ENCODE measurements at regions of chr2 and their contacts with region 1.

Region 1: GRCh38 chr2:177164584-177165052 is 48.0 kb upstream of the HNRNPA3 start:
- DNase-seq: peak; percentile 70 to 76 (median 74)
- H3K4me3 ChIP-seq: no peak overlapping the region
- H3K4me3 Mint-ChIP-seq: no peak overlapping the region
- H3K27ac ChIP-seq: no peak overlapping the region
- H3K27ac Mint-ChIP-seq: no peak overlapping the region
- H3K4me1 ChIP-seq: peaks cover 25% of the 10 kb centered on the region
- H3K4me1 Mint-ChIP-seq: peaks cover 7 to 19% (median 12%) of the 10 kb centered on the region in 4 donors
- H3K27me3 ChIP-seq: no peaks in the 10 kb centered on the region
- H3K27me3 Mint-ChIP-seq: peaks cover 2 to 5% of the 10 kb centered on the region in 2 donors

Region 2: GRCh38 chr2:177183860-177184259 is 19.2 kb after region 1 on chr2:
- CTCF ChIA-PET with region 1: interaction called, 24 read pairs
- POLR2A ChIA-PET with region 1: interaction called, 3 read pairs
- intact Hi-C with region 1: no loop called
- DNase-seq: no peak
- H3K4me3 ChIP-seq: no peak overlapping the region
- H3K4me3 Mint-ChIP-seq: peak overlapping the region in 1 of 8 donors; percentile 15
- H3K27ac ChIP-seq: no peak overlapping the region
- H3K27ac Mint-ChIP-seq: peak overlapping the region in 1 of 7 donors; percentile 48
- H3K4me1 ChIP-seq: no peaks in the 10 kb centered on the region
- H3K4me1 Mint-ChIP-seq: no peaks in the 10 kb centered on the region
- H3K27me3 ChIP-seq: no peaks in the 10 kb centered on the region
- H3K27me3 Mint-ChIP-seq: peaks cover 0 to 2% of the 10 kb centered on the region in 2 donors

Region 3: GRCh38 chr2:177239932-177240630 is 75.5 kb after region 1 on chr2:
- CTCF ChIA-PET with region 1: interaction called, 12 read pairs
- POLR2A ChIA-PET with region 1: interaction called, 6 read pairs
- intact Hi-C with region 1: no loop called
- DNase-seq: peak; percentile 43 to 62 (median 49)
- H3K4me3 ChIP-seq: no peak overlapping the region
- H3K4me3 Mint-ChIP-seq: peak overlapping the region in 7 of 8 donors; percentile 13 to 78 (median 64)
- H3K27ac ChIP-seq: peak overlapping the region; percentile 22
- H3K27ac Mint-ChIP-seq: peak overlapping the region; percentile 44 to 96 (median 89)
- H3K4me1 ChIP-seq: peaks cover 85% of the 10 kb centered on the region
- H3K4me1 Mint-ChIP-seq: peaks cover 56 to 89% (median 72%) of the 10 kb centered on the region in 4 donors
- H3K27me3 ChIP-seq: no peaks in the 10 kb centered on the region
- H3K27me3 Mint-ChIP-seq: no peaks in the 10 kb centered on the region

Region 4: DNA sequence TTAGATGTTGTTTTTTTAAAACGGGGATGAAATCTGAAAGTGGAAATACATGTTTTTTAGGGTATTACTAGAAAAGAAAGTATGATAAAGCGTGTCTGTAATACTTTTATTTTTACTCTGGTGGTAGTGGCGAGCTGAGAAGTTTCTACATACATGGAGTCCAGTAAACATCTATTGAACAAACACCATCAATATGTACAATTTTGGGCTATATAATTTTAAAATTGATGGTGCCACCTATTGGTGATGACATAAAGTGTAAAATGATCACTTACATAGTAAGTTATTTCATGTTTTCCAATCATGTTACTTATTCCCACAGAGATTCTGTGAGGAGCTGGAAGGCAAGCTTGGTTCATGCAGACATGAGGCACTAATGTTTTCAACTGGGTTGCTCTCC is 131.4 kb after region 1 on chr2:
- CTCF ChIA-PET with region 1: interaction called, 192 read pairs
- POLR2A ChIA-PET with region 1: interaction called, 26 read pairs
- intact Hi-C with region 1: loop called (anchors 1 kb)
- DNase-seq: peak in 4 of 5 donors; percentile 34 to 49 (median 43)
- H3K4me3 ChIP-seq: no peak overlapping the region
- H3K4me3 Mint-ChIP-seq: peak overlapping the region in 1 of 8 donors; percentile 4
- H3K27ac ChIP-seq: no peak overlapping the region
- H3K27ac Mint-ChIP-seq: peak overlapping the region in 3 of 7 donors; percentile 16 to 72 (median 37)
- H3K4me1 ChIP-seq: peaks cover 9% of the 10 kb centered on the region
- H3K4me1 Mint-ChIP-seq: peaks cover 4 to 7% (median 5%) of the 10 kb centered on the region in 4 donors
- H3K27me3 ChIP-seq: no peaks in the 10 kb centered on the region
- H3K27me3 Mint-ChIP-seq: no peaks in the 10 kb centered on the region

Region 5: GRCh38 chr2:177392373-177393202 is 228.0 kb after region 1 on chr2 and contains the start of gene AGPS:
- CTCF ChIA-PET with region 1: interaction called, 12 read pairs
- POLR2A ChIA-PET with region 1: interaction called, 4 read pairs
- intact Hi-C with region 1: no loop called
- DNase-seq: peak; percentile 66 to 76 (median 72)
- H3K4me3 ChIP-seq: peak within 1 kb of the TSS; percentile 78
- H3K4me3 Mint-ChIP-seq: peak within 1 kb of the TSS; percentile 92 to 98 (median 94)
- H3K27ac ChIP-seq: peak within 1 kb of the TSS; percentile 56
- H3K27ac Mint-ChIP-seq: peak within 1 kb of the TSS; percentile 79 to 94 (median 92)
- H3K4me1 ChIP-seq: peaks cover 47% of the 10 kb centered on the region
- H3K4me1 Mint-ChIP-seq: peaks cover 47 to 63% (median 53%) of the 10 kb centered on the region in 4 donors
- H3K27me3 ChIP-seq: no peaks in the 10 kb centered on the region
- H3K27me3 Mint-ChIP-seq: no peaks in the 10 kb centered on the region
- total RNA-seq, gene AGPS: 28.3 to 29.7 TPM

Region 6: GRCh38 chr2:177618255-177619253 is 453.9 kb after region 1 on chr2:
- CTCF ChIA-PET with region 1: no interaction called
- POLR2A ChIA-PET with region 1: no interaction called
- intact Hi-C with region 1: loop called (anchors 10 kb)
- DNase-seq: peak; percentile 92 to 94 (median 93)
- H3K4me3 ChIP-seq: peak overlapping the region; percentile 85 to 87
- H3K4me3 Mint-ChIP-seq: peak overlapping the region; percentile 92 to 98 (median 97)
- H3K27ac ChIP-seq: peak overlapping the region; percentile 97
- H3K27ac Mint-ChIP-seq: peak overlapping the region; percentile 98 to 100 (median 100)
- H3K4me1 ChIP-seq: peaks cover 5% of the 10 kb centered on the region
- H3K4me1 Mint-ChIP-seq: peaks cover 3 to 19% (median 8%) of the 10 kb centered on the region in 4 donors
- H3K27me3 ChIP-seq: no peaks in the 10 kb centered on the region
- H3K27me3 Mint-ChIP-seq: peaks cover 4 to 9% of the 10 kb centered on the region in 2 donors

Measured in CD4-positive, alpha-beta memory T cell (primary cell).